ENCODE measurements at regions of chr1 and their contacts with region 1.

Region 1: DNA sequence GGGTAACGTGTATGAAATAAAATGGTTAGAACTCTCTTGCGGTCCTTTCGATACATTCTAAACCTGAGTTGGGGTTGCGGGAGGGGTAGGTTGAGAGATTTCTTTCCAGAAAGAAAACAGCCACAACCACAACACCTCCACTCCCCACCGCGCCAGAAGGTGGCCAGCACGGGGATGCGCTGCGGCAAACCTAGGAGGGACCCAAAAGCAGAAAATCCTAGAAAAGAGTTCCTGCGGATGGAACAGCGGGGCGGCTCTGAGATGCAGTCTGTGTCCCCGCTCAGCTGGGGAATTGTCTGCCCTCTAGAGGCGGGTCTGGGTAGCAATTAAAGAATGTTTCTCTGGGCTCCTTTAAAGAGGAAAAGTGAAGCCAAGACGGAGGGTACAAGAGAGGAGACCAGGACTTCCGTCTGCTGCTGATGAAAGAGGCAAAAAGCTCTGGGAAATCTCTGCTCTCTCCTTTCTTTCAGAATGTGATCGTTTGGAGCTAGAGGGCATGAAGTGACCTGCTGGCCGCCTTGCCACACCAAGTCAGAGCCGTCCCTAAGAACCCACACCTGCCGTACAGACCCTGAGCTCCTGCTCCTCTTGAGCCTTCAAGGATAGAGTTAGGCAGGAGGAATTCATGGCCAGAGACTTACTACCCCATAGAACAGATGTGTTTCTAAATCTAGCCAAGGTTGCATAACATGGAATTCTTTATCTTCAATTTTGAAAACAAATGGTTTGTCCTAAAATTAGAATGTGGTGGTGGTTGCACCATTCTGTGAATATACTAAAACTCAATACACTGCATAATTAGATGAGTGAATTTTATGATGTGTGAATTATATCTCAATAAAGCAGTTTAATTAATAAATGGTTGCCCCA is 46.5 kb upstream of the COA6 start:
- DNase-seq: peak; percentile 79
- H3K4me3 Mint-ChIP-seq: peak overlapping the region; percentile 2
- H3K27ac Mint-ChIP-seq: no peak overlapping the region
- H3K4me1 Mint-ChIP-seq: no peaks in the 10 kb centered on the region
- H3K27me3 Mint-ChIP-seq: peaks cover 59% of the 10 kb centered on the region
- CTCF ChIP-seq: peak; percentile 86

Region 2: GRCh38 chr1:234114648-234115307 is 212.0 kb before region 1 on chr1:
- CTCF ChIA-PET with region 1: interaction called, 3 read pairs
- intact Hi-C with region 1: loop called (anchors 5 kb)
- DNase-seq: peak; percentile 28
- H3K4me3 Mint-ChIP-seq: peak overlapping the region; percentile 40
- H3K27ac Mint-ChIP-seq: no peak overlapping the region
- H3K4me1 Mint-ChIP-seq: peaks cover 9% of the 10 kb centered on the region
- H3K27me3 Mint-ChIP-seq: peaks cover 7% of the 10 kb centered on the region
- CTCF ChIP-seq: peak; percentile 57

Measured in Calu3 (cell line).